SK-N-SH (cell line): ENCODE measurements at regions of chr11 and their contacts with region 1.

Region 1: GRCh38 chr11:67317205-67317887 is 14.0 kb downstream of the SSH3 start:
- DNase-seq: peak; percentile 98
- H3K4me3 ChIP-seq: peak overlapping the region; percentile 83 to 85
- H3K27ac ChIP-seq: peak overlapping the region; percentile 84 to 95
- H3K4me1 ChIP-seq: peaks cover 4 to 16% of the 10 kb centered on the region in 2 experiments; a peak in 1 of 4 replicates
- H3K27me3 ChIP-seq: no peaks in the 10 kb centered on the region
- CTCF ChIP-seq: peak; percentile 94
- EP300 ChIP-seq: no peak
- RAD21 ChIP-seq: peak; percentile 92

Region 2: GRCh38 chr11:67167086-67167485 is 150.3 kb before region 1 on chr11:
- CTCF ChIA-PET with region 1: interaction called, 10 read pairs
- POLR2A ChIA-PET with region 1: no interaction called
- DNase-seq: no peak
- H3K4me3 ChIP-seq: no peak overlapping the region
- H3K27ac ChIP-seq: peak overlapping the region; percentile 29 to 79
- H3K4me1 ChIP-seq: peaks cover 0 to 15% of the 10 kb centered on the region in 2 experiments; a peak in 2 of 4 replicates
- H3K27me3 ChIP-seq: no peaks in the 10 kb centered on the region
- CTCF ChIP-seq: no peak
- EP300 ChIP-seq: no peak
- RAD21 ChIP-seq: no peak

Region 3: GRCh38 chr11:67252831-67253239 is 64.5 kb before region 1 on chr11:
- CTCF ChIA-PET with region 1: interaction called, 22 read pairs
- POLR2A ChIA-PET with region 1: no interaction called
- DNase-seq: no peak
- H3K4me3 ChIP-seq: no peak overlapping the region
- H3K27ac ChIP-seq: no peak overlapping the region; a peak in 1 of 4 replicates
- H3K4me1 ChIP-seq: no peaks in the 10 kb centered on the region
- H3K27me3 ChIP-seq: no peaks in the 10 kb centered on the region
- CTCF ChIP-seq: peak; percentile 50
- EP300 ChIP-seq: no peak
- RAD21 ChIP-seq: peak; percentile 43

Region 4: GRCh38 chr11:67288452-67289225 is 28.7 kb before region 1 on chr11:
- CTCF ChIA-PET with region 1: interaction called, 37 read pairs
- POLR2A ChIA-PET with region 1: interaction called, 5 read pairs
- DNase-seq: peak; percentile 97
- H3K4me3 ChIP-seq: peak overlapping the region; percentile 65 to 87
- H3K27ac ChIP-seq: peak overlapping the region; percentile 91 to 98
- H3K4me1 ChIP-seq: peaks cover 9 to 30% of the 10 kb centered on the region in 2 experiments; a peak in 3 of 4 replicates
- H3K27me3 ChIP-seq: no peaks in the 10 kb centered on the region
- CTCF ChIP-seq: peak; percentile 31; the same call in 1 of the 2 replicates
- EP300 ChIP-seq: peak in 1 of 2 experiments; percentile 5; a peak in 1 of 4 replicates
- RAD21 ChIP-seq: peak; percentile 26; the same call in 1 of the 2 replicates

Region 5: DNA sequence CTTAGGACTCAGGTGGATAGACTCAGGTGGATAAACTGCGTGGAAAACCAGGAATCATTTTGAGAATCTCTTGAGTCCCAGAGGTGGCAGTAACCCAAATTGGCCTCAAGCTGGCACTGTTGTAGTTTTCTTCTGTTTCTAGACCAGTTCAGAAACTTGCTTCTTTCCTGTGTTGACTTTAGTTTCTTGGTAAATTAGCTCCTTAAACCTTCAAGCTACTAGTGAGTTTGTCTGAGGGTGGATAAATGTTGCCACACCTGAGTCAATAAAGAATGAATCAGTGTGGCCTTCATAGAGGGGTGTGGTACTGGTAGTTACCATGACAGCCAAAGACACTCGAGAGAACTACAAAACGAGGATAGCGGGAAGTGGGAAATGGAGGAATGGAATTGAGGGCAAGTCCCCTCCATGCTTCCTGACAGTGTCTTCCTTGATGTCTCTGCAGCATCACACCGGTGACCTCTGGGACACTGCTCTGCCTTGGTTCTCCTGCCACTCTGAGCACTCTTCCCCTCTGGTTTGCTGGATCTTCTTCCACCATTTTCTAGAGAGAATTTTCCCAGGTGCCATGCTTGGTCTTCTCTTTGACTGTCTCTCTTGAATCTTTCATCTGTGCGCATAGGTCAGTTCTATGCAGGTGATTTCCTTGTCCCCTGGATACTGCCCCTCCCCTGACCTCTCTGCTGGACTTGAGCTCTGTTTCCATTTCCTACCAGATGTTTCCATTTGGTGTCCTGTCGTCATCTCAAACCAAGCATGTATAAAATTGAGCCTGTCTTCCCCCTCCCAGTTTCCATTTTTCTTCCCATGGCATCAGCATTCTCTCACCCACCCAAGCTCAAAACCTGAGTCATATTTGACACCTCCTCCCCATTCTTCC is 28.8 kb after region 1 on chr11:
- CTCF ChIA-PET with region 1: interaction called, 31 read pairs
- POLR2A ChIA-PET with region 1: no interaction called
- DNase-seq: peak; percentile 10
- H3K4me3 ChIP-seq: no peak overlapping the region
- H3K27ac ChIP-seq: no peak overlapping the region
- H3K4me1 ChIP-seq: peaks cover 5 to 29% of the 10 kb centered on the region in 2 experiments; a peak in 1 of 4 replicates
- H3K27me3 ChIP-seq: no peaks in the 10 kb centered on the region
- CTCF ChIP-seq: peak; percentile 77
- EP300 ChIP-seq: no peak
- RAD21 ChIP-seq: peak; percentile 66

Region 6: DNA sequence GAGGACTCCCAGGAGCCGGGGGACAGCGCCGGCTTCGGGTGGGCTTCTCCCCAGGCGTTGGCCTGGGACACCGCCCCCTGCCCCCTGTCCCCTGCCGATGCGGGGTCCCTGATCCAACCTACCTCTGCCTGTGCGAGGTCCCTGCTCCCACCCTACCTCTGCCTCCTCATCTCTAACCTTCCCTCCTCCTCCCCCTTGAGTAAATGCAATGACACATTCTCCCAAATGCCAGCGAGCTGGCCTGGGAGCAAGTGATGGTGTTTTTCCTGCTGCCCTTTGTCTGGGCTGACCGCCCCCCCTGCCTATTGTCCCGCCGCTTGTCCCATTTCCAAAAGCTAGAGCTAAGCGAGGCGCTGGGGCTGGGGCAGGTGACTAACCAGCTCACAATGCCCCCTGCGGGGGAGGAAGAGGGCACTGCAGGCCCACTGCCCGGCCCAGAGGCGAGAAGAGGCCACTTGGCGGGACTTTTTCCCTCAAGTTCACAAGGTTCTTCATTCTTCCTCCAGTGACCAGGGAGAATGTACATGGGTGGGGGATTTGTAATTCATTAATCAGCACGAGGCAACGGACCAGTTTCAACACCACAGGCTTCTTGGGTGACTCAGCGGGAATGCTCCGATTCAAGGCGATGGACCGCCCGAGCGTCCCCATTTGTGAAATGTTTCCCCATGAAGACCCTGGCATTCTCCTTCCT is 56.7 kb after region 1 on chr11:
- CTCF ChIA-PET with region 1: interaction called, 12 read pairs
- POLR2A ChIA-PET with region 1: no interaction called
- DNase-seq: peak; percentile 69
- H3K4me3 ChIP-seq: peak overlapping the region; percentile 61 to 83
- H3K27ac ChIP-seq: peak overlapping the region; percentile 67 to 96
- H3K4me1 ChIP-seq: peaks cover 39 to 47% of the 10 kb centered on the region in 2 experiments; a peak in 3 of 4 replicates
- H3K27me3 ChIP-seq: no peaks in the 10 kb centered on the region
- CTCF ChIP-seq: peak; percentile 55
- EP300 ChIP-seq: peak in 1 of 2 experiments; percentile 79; a peak in 2 of 4 replicates
- RAD21 ChIP-seq: peak; percentile 17; the same call in 1 of the 2 replicates

Region 7: GRCh38 chr11:67482825-67483798 is 165.8 kb after region 1 on chr11 and contains the start of gene AIP:
- CTCF ChIA-PET with region 1: no interaction called
- POLR2A ChIA-PET with region 1: no interaction called
- DNase-seq: peak; percentile 98
- H3K4me3 ChIP-seq: peak within 1 kb of the TSS; percentile 54 to 62
- H3K27ac ChIP-seq: peak within 1 kb of the TSS; percentile 65 to 87
- H3K4me1 ChIP-seq: peaks cover 6 to 17% of the 10 kb centered on the region in 2 experiments; a peak in 3 of 4 replicates
- H3K27me3 ChIP-seq: no peaks in the 10 kb centered on the region; the same call in 1 of the 2 replicates
- CTCF ChIP-seq: no peak
- EP300 ChIP-seq: no peak
- RAD21 ChIP-seq: no peak
- polyA plus RNA-seq, gene AIP: 192 and 207 TPM in 2 replicates